Head of caudate nucleus (tissue), 42 donors: ENCODE measurements at regions of chr18 and their contacts with region 1.

Region 1: GRCh38 chr18:79951578-79952455 is at the start of gene SLC66A2:
- DNase-seq: peak; percentile 79 to 99 (median 94)

Region 2: DNA sequence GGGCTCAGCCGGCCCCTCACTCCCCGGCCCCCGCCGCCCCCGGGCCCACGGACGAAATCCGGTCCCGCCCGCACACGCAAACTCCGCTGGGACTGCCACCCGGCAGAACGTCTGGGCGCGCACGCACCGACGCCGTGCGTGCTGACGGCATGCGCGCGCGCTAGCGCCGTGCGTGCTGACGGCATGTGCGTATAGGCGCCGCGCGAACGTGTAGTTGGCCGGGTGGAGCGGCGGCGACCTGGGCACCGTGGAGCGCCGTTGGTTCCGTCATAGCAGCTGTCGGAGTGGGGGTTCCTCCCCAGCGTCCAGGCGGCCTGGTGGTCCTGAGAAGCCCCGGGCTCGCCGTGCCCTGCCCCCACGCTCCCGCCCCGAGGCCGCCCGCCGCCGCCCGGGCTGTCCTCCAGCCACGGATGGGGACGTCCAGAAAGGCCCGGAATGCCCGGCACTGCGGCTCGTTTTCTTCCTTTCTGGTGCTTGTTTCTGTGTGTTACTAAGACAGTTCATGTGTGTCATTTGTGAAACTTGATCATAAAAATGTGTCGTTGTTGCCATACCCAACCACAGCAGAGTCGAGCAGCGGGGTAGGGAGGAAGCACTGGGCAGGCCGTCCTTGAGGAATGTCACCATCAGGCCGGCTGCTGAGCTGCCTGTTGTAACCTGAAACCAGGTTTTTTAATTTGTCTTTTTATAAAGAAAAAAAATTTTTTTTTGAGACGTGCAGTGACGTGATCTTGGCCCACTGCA is 36.8 kb after region 1 on chr18 and contains the start of gene TXNL4A:
- intact Hi-C with region 1: loop called (anchors 5 kb)
- DNase-seq: peak; percentile 72 to 95 (median 89)